A673 (cell line): ENCODE measurements at regions of chr1 and their contacts with region 1.

Region 1: DNA sequence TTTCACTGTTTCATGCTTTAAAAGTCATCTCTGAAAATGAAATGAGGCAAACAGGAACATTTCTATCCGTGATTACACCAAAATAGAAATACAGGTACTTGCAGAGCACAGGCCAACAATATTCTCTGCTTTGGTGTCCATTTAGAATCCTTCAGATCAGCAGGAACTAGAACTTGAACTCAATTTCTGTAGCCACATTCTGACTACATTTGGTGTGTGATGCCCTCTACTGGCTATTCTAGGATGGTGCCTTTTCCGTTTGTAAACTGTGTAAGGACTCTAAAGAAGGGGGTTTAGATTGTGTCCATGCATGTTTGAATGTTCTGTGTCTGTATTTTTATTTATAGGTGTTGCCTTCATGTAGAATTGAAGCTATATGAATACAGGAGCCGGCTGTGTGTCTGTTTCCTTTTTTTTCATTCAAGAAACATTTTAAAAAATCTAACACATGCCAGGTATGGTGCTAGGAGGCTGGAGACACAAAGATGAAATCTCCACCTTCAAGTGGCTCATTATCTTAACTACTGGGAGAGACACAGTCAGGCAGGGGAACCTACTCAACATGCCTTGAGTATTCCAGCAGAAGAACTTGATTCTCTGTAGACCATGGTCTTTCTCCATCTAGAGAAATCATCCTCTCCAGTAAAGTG is 7.6 kb upstream of the ZNF326 start:
- DNase-seq: peak; percentile 87
- H3K4me3 ChIP-seq: no peak overlapping the region
- H3K27ac ChIP-seq: no peak overlapping the region
- H3K4me1 ChIP-seq: peaks cover 40% of the 10 kb centered on the region
- H3K27me3 ChIP-seq: no peaks in the 10 kb centered on the region
- CTCF ChIP-seq: peak; percentile 89

Region 2: DNA sequence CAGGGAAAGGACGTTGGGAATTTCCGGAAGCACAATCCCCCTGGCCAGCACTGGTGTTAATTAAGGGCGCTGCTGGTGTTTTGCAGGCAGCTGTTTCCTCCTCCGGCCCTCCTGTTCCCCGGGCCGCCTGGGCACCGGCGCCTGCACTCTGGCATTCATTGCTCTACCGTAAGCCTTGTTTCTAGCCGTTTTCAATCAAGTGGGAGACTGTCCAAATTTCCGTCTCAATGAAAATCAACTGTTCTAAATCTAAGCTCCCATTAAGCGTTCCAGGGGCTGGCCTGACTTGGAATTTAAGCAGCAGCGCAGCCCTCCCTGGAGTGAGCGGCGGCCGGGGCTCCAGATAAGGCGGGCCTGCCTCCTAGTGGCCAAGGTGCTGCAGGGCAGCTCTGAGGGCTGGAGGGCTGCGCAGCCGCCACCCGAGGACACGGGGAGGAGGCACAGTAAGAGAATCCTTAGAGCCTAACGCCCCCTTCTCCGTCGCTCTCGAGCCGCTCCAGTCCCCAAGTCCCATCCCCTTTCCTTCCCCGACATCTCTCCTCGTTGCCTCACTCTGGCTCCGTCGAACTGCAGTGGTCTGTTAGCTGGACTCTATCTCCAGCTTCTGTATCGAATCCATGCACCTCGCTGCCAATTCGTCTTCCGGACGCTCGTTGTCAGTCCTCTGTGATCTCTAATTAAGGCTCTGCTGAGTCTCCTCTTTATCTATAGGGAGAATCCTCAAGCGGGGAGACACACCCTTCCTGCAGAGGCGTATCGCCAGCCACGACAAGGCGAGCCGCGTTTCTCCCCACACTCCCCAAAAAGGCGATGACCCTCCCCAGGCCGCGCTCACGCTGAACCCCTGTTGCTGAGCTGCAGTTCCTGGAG is 224.3 kb before region 1 on chr1:
- CTCF ChIA-PET with region 1: no interaction called
- POLR2A ChIA-PET with region 1: interaction called, 14 read pairs
- intact Hi-C with region 1: no loop called
- DNase-seq: peak; percentile 96
- H3K4me3 ChIP-seq: peak overlapping the region; percentile 47
- H3K27ac ChIP-seq: no peak overlapping the region
- H3K4me1 ChIP-seq: peaks cover 25% of the 10 kb centered on the region
- H3K27me3 ChIP-seq: no peaks in the 10 kb centered on the region
- CTCF ChIP-seq: peak; percentile 99

Region 3: GRCh38 chr1:89804642-89805237 is 182.6 kb before region 1 on chr1:
- CTCF ChIA-PET with region 1: interaction called, 9 read pairs
- POLR2A ChIA-PET with region 1: no interaction called
- intact Hi-C with region 1: loop called (anchors 1 kb)
- DNase-seq: peak; percentile 91
- H3K4me3 ChIP-seq: no peak overlapping the region
- H3K27ac ChIP-seq: no peak overlapping the region
- H3K4me1 ChIP-seq: no peaks in the 10 kb centered on the region
- H3K27me3 ChIP-seq: no peaks in the 10 kb centered on the region
- CTCF ChIP-seq: peak; percentile 97

Region 4: GRCh38 chr1:89843281-89844121 is 143.8 kb before region 1 on chr1:
- CTCF ChIA-PET with region 1: no interaction called
- POLR2A ChIA-PET with region 1: no interaction called
- intact Hi-C with region 1: loop called (anchors 1 kb)
- DNase-seq: peak; percentile 82
- H3K4me3 ChIP-seq: peak overlapping the region; percentile 57
- H3K27ac ChIP-seq: peak overlapping the region; percentile 49
- H3K4me1 ChIP-seq: peaks cover 44% of the 10 kb centered on the region
- H3K27me3 ChIP-seq: no peaks in the 10 kb centered on the region
- CTCF ChIP-seq: peak; percentile 56

Region 5: GRCh38 chr1:89865498-89866385 is 121.6 kb before region 1 on chr1:
- CTCF ChIA-PET with region 1: no interaction called
- POLR2A ChIA-PET with region 1: no interaction called
- intact Hi-C with region 1: no loop called
- DNase-seq: peak; percentile 65
- H3K4me3 ChIP-seq: no peak overlapping the region
- H3K27ac ChIP-seq: peak overlapping the region; percentile 14
- H3K4me1 ChIP-seq: peaks cover 52% of the 10 kb centered on the region
- H3K27me3 ChIP-seq: no peaks in the 10 kb centered on the region
- CTCF ChIP-seq: no peak